Heart right ventricle (tissue), 16 donors: ENCODE measurements at regions of chr11 and their contacts with region 1.

Region 1: DNA sequence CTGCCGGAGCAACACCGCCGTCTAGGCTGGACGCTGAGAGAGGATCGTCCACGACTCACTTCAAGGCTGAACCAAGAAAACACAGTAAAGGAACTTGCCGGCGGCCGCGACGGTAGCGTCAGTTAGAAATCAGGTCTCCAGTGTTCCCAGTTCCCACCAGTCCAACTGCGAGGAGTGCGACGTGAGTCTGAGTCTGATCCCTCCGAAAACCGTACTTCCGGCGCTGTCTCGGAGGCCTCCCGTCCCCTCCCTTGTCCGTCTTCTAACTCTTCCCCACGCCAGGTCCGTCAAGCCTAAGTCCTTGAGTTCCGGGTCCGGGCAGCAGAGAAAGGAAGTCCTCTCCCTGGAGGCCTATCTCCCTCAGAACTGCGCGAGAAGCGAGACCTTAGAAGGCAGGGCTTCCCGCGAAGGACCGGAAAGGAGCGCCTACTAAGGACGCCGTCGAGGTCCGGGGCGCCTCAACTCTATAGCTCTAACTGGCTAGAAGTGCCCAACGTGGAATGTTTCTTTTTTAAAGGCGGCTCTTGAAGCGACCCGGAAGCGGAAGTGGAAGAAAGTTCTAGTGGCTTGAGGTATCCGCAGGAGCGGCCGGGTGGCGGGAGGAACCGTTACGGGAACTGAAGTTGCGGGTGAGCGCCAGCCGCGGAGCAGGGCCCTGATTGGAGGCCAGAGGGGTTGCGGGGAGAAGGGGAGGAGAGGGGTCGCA is at the starts of genes BANF1 and EIF1AD:
- DNase-seq: peak; percentile 86 to 97
- ATAC-seq: peak; percentile 89 to 96 (median 94)
- H3K4me3 ChIP-seq: peak within 1 kb of the TSS; percentile 73 to 99 (median 92)
- H3K27ac ChIP-seq: peak within 1 kb of the TSS; percentile 84 to 98 (median 95)
- H3K4me1 ChIP-seq: peaks cover 10 to 41% (median 24%) of the 10 kb centered on the region in 9 donors
- H3K27me3 ChIP-seq: no peaks in the 10 kb centered on the region
- CTCF ChIP-seq: peak in 1 of 9 donors; percentile 13
- total RNA-seq, gene BANF1: 196 to 224 (median 212) TPM
- total RNA-seq, gene EIF1AD: 15.1 to 25.3 (median 19.7) TPM

Region 2: DNA sequence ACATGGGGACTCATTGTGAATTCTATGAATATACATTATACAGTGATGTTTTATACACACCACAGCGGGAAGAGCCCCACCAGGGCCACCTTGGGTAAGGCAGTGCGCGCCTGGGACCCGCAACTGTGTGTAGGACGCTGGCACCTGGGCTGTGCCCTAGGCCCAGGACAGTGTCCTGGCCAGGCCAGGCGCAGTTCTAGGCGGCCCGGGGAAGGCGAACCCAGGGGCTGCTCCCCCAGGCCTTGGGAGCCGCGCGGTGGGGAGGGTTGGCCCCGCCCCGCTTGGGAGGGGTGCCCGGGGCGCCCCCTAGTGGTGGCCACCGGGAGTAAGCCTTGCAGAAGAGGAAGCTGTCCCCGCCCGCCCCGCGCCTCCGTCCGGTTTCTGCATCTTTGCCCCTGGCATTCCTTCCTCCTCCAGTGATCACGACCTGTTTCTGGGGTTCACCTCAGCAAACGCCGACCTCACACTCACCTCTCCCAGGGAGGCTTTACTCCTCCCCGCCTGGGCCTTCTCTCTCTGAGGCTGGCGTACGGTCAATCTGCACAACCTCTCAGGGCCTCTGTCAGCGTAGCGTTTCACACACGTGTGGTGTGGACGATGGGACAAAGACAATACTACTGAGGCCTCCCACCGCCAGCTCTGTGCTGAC is 1114.2 kb before region 1 on chr11:
- intact Hi-C with region 1: loop called in 1 of 10 experiments (anchors 10 kb)
- DNase-seq: peak; percentile 80 to 90
- ATAC-seq: peak; percentile 83 to 96 (median 92)
- H3K4me3 ChIP-seq: peak overlapping the region in 7 of 10 donors; percentile 21 to 42 (median 34)
- H3K27ac ChIP-seq: peak overlapping the region; percentile 10 to 83 (median 62)
- H3K4me1 ChIP-seq: peaks cover 9 to 45% (median 26%) of the 10 kb centered on the region in 9 donors
- H3K27me3 ChIP-seq: no peaks in the 10 kb centered on the region
- CTCF ChIP-seq: peak; percentile 98 to 100 (median 99)

Region 3: DNA sequence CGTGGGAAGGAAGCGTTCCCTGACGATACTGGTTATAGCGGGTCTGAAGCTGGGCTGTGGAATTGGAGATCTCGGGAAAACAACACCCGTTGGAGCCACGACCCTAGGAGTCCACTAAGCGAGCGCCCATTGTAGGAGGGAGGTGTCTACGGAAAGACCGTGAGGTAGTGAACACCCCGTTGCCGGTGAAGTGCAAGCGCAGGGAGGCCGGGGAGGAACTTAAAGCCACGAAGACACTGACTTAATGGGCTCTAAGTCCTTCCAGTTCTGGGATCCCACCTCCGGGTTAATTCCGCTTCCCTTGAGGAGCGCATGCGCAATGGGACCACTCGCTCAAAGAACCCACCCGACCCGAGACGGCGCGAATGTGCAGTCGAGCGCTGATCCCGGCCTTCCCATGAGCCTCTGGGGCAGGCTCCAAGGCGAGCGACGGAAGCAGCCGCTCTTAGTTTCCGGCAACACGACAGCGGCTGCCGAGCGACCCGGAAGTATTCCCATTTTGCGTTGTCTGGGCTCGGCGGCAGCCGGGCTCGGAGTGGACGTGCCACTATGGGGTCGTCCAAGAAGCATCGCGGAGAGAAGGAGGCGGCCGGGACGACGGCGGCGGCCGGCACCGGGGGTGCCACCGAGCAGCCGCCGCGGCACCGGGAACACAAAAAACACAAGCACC is 40.7 kb before region 1 on chr11 and contains the start of gene SART1:
- intact Hi-C with region 1: loop called in 4 of 10 experiments (anchors 5 kb)
- DNase-seq: peak; percentile 97 to 99
- ATAC-seq: peak; percentile 97 to 99 (median 99)
- H3K4me3 ChIP-seq: peak within 1 kb of the TSS; percentile 80 to 100 (median 92)
- H3K27ac ChIP-seq: peak within 1 kb of the TSS; percentile 74 to 98 (median 92)
- H3K4me1 ChIP-seq: peaks cover 6 to 34% (median 27%) of the 10 kb centered on the region in 9 donors
- H3K27me3 ChIP-seq: no peaks in the 10 kb centered on the region
- CTCF ChIP-seq: peak in 1 of 9 donors; percentile 10
- total RNA-seq, gene SART1: 26.2 to 40.1 (median 32.5) TPM

Region 4: GRCh38 chr11:66022401-66023185 is 20.5 kb after region 1 on chr11:
- intact Hi-C with region 1: no loop called
- DNase-seq: peak; percentile 65 to 81
- ATAC-seq: peak; percentile 62 to 87 (median 85)
- H3K4me3 ChIP-seq: peak overlapping the region in 7 of 10 donors; percentile 4 to 29 (median 17)
- H3K27ac ChIP-seq: no peak overlapping the region
- H3K4me1 ChIP-seq: peaks cover 0 to 26% (median 8%) of the 10 kb centered on the region in 9 donors
- H3K27me3 ChIP-seq: peaks cover 0 to 9% (median 7%) of the 10 kb centered on the region in 7 donors
- CTCF ChIP-seq: peak; percentile 89 to 98 (median 95)

Region 5: GRCh38 chr11:66051766-66052663 is 49.9 kb after region 1 on chr11 and contains the start of gene SF3B2:
- intact Hi-C with region 1: loop called in 1 of 10 experiments (anchors 2 kb)
- DNase-seq: peak; percentile 96 to 98
- ATAC-seq: peak; percentile 96 to 99 (median 98)
- H3K4me3 ChIP-seq: peak within 1 kb of the TSS; percentile 77 to 100 (median 97)
- H3K27ac ChIP-seq: peak within 1 kb of the TSS; percentile 51 to 97 (median 92)
- H3K4me1 ChIP-seq: peaks cover 7 to 53% (median 31%) of the 10 kb centered on the region in 9 donors
- H3K27me3 ChIP-seq: peaks cover 0 to 25% (median 17%) of the 10 kb centered on the region in 7 donors
- CTCF ChIP-seq: peak in 3 of 9 donors; percentile 10 to 17 (median 13)
- total RNA-seq, gene SF3B2: 62.0 to 89.8 (median 72.7) TPM